ENCODE measurements at regions of chr11 and their contacts with region 1.

Region 1: GRCh38 chr11:130413405-130414106 is 14.9 kb downstream of the ADAMTS8 start:
- DNase-seq: peak; percentile 95
- ATAC-seq: peak; percentile 93
- H3K4me3 ChIP-seq: no peak overlapping the region
- H3K27ac ChIP-seq: peak overlapping the region; percentile 83
- H3K4me1 ChIP-seq: peaks cover 20% of the 10 kb centered on the region
- H3K27me3 ChIP-seq: no peaks in the 10 kb centered on the region
- CTCF ChIP-seq: no peak
- POLR2A ChIP-seq: no peak
- RAD21 ChIP-seq: no peak; the same call in 1 of the 2 replicates

Region 2: GRCh38 chr11:130383344-130384211 is 30.0 kb before region 1 on chr11:
- CTCF ChIA-PET with region 1: interaction called, 3 read pairs
- POLR2A ChIA-PET with region 1: no interaction called
- dilution Hi-C with region 1: no loop called
- in situ Hi-C with region 1: no loop called
- intact Hi-C with region 1: loop called (anchors 2 kb)
- DNase-seq: peak; percentile 100
- ATAC-seq: peak; percentile 93
- H3K4me3 ChIP-seq: no peak overlapping the region
- H3K27ac ChIP-seq: peak overlapping the region; percentile 31; the same call in 1 of the 2 replicates
- H3K4me1 ChIP-seq: peaks cover 13% of the 10 kb centered on the region
- H3K27me3 ChIP-seq: peaks cover 20% of the 10 kb centered on the region
- CTCF ChIP-seq: no peak
- POLR2A ChIP-seq: no peak
- RAD21 ChIP-seq: 0 out of 2 replicates have a peak, but pooled peaks have one; percentile 1

Measured in IMR-90 (cell line).